ENCODE measurements at regions of chr4 and their contacts with region 1.

Region 1: DNA sequence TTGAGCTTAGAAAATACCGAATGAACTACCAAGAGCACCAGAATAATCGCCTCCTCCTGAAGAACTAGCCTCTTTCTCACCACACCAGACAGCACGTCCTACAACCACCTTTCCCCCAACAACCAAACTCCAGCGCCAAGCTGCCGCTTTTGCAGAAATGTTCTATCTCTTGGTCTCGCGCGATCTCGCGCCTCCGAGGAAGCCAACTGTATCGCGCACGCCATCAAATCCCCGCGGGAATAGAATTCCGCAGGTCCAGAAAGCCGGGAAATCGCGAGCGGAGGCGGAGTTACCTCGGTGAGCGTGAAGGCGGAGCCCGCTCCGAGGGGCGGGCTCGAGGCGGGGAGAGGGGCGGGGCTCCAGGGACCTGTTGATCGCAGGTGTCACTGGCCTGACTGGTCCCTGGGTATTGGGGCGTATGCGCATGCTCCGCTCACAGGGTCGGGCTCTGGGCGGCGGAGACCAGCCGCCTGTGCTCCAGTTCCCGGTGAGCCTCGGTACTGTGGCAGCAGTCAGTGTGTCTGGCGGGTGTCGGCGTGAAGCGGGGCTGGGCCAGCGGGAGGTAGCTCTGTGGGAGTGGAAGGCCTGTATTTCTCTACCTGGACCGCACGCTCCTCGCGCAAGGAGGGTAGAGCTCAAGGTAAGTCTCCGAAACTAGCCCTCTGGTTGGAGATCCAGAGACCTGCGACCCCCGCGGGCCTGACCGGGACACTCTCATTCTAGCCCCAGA is at the start of gene USP53:
- DNase-seq: peak; percentile 99
- H3K4me3 ChIP-seq: peak within 1 kb of the TSS; percentile 52 to 90 (median 74)
- H3K27ac ChIP-seq: peak within 1 kb of the TSS; percentile 92 to 97 (median 94)
- H3K4me1 ChIP-seq: peaks cover 0 to 9% (median 0%) of the 10 kb centered on the region in 4 donors
- H3K27me3 ChIP-seq: no peaks in the 10 kb centered on the region
- CTCF ChIP-seq: no peak
- EP300 ChIP-seq: peak in 1 of 4 donors; percentile 48
- POLR2A ChIP-seq: peak; percentile 74 to 91
- total RNA-seq, gene USP53: 31.1 to 64.0 (median 46.7) TPM

Region 2: GRCh38 chr4:118981839-118982381 is 230.5 kb before region 1 on chr4:
- intact Hi-C with region 1: loop called (anchors 2 kb)
- DNase-seq: peak; percentile 86
- H3K4me3 ChIP-seq: peak overlapping the region in 3 of 4 donors; percentile 12 to 17 (median 15)
- H3K27ac ChIP-seq: peak overlapping the region; percentile 84 to 90 (median 87)
- H3K4me1 ChIP-seq: peaks cover 0 to 91% (median 67%) of the 10 kb centered on the region in 4 donors
- H3K27me3 ChIP-seq: no peaks in the 10 kb centered on the region
- CTCF ChIP-seq: peak; percentile 63 to 90 (median 73)
- EP300 ChIP-seq: no peak
- POLR2A ChIP-seq: no peak

Region 3: GRCh38 chr4:119041951-119042560 is 170.3 kb before region 1 on chr4:
- intact Hi-C with region 1: loop called (anchors 5 kb)
- DNase-seq: peak; percentile 79
- H3K4me3 ChIP-seq: no peak overlapping the region
- H3K27ac ChIP-seq: peak overlapping the region; percentile 18 to 98 (median 89)
- H3K4me1 ChIP-seq: peaks cover 0 to 86% (median 60%) of the 10 kb centered on the region in 4 donors
- H3K27me3 ChIP-seq: no peaks in the 10 kb centered on the region
- CTCF ChIP-seq: peak; percentile 34 to 72 (median 70)
- EP300 ChIP-seq: no peak
- POLR2A ChIP-seq: no peak

Region 4: GRCh38 chr4:119106036-119107000 is 106.1 kb before region 1 on chr4:
- intact Hi-C with region 1: loop called (anchors 5 kb)
- DNase-seq: no peak
- H3K4me3 ChIP-seq: no peak overlapping the region
- H3K27ac ChIP-seq: no peak overlapping the region
- H3K4me1 ChIP-seq: peaks cover 0 to 10% (median 8%) of the 10 kb centered on the region in 4 donors
- H3K27me3 ChIP-seq: no peaks in the 10 kb centered on the region
- CTCF ChIP-seq: no peak
- EP300 ChIP-seq: no peak
- POLR2A ChIP-seq: no peak

Region 5: DNA sequence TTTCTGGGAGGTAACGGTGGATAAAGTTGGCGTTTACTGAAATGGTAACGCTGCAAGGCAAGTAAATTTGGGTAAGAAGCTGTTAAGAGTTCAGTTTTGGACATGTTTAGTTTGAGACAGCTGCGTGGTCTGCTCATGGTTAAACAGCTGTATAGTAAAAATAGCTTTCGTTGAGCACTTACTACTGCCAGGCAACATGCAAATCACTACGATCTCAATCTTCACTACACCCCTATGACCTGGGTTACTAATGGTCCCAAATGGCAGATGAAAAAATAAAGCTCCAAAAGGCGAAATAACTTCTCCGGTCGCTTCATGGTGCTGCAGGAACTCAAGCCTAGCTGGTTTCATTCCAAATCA is 87.3 kb after region 1 on chr4:
- intact Hi-C with region 1: loop called (anchors 5 kb)
- DNase-seq: no peak
- H3K4me3 ChIP-seq: peak overlapping the region; percentile 56 to 87 (median 68)
- H3K27ac ChIP-seq: peak overlapping the region; percentile 85 to 93 (median 92)
- H3K4me1 ChIP-seq: peaks cover 0 to 29% (median 25%) of the 10 kb centered on the region in 4 donors
- H3K27me3 ChIP-seq: no peaks in the 10 kb centered on the region
- CTCF ChIP-seq: no peak
- EP300 ChIP-seq: no peak
- POLR2A ChIP-seq: no peak

Region 6: DNA sequence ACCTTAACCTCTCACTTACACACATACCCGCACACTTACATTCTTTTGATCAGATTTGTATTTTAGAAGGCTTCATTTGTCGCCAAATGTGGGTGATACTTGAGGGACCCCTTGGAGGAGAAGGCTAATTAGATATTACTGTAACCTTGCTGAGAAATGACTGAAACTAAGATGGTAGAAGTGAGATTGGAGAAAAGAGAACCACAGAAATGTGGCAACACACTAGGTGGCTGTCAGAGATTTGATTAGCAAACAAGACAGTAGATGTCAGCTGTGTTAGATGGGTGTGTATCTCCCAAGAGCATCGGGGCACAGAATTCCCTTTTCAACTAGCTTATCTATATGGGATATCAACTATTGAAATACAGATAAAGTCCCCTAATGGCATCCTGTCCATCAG is 258.9 kb after region 1 on chr4:
- intact Hi-C with region 1: no loop called
- DNase-seq: no peak
- H3K4me3 ChIP-seq: no peak overlapping the region
- H3K27ac ChIP-seq: no peak overlapping the region
- H3K4me1 ChIP-seq: no peaks in the 10 kb centered on the region
- H3K27me3 ChIP-seq: no peaks in the 10 kb centered on the region
- CTCF ChIP-seq: no peak
- EP300 ChIP-seq: no peak
- POLR2A ChIP-seq: no peak